Heart left ventricle (tissue), 16 donors: ENCODE measurements at regions of chr12 and their contacts with region 1.

Region 1: GRCh38 chr12:124532331-124532750 is 35.1 kb downstream of the NCOR2 start:
- DNase-seq: peak in 3 of 5 donors; percentile 6 to 51 (median 25)
- ATAC-seq: no peak
- H3K4me3 ChIP-seq: no peak overlapping the region
- H3K27ac ChIP-seq: peak overlapping the region in 1 of 12 donors; percentile 40
- H3K4me1 ChIP-seq: peaks cover 0 to 45% (median 31%) of the 10 kb centered on the region in 12 donors
- H3K27me3 ChIP-seq: no peaks in the 10 kb centered on the region
- CTCF ChIP-seq: no peak
- POLR2A ChIP-seq: no peak

Region 2: DNA sequence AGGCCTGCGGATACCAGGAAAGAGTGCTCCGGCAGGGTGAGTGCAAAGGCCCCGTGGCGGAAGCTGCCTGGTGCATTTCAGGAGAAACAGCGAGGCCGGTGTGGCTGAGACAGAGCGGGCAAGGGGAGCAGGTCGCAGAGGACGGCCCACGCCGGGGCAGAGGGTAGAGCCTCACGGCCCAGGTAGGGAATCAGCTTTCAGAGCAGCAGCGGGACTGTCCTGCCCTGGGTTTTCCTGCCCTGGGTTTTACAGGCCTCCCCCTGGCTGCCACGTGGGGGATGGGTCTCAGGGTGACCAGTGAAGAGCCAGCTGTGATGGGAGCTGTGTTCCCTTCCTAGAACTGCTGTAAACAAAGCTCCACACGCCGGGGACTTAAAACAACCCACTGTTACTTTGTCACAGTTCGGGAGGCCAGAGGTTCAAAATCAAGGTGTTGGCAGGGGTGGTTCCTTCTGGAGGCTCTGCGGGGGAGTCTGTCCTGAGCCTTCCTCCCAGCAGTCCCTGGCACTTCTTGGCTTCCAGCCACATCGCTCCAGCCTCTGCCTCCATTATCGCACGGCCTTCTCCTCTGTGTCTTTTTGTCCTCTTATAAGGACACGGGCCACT is 24.7 kb after region 1 on chr12:
- intact Hi-C with region 1: loop called in 1 of 10 experiments (anchors 2 kb)
- DNase-seq: no peak
- ATAC-seq: peak in 2 of 4 donors; percentile 27 to 29
- H3K4me3 ChIP-seq: no peak overlapping the region
- H3K27ac ChIP-seq: peak overlapping the region in 6 of 12 donors; percentile 4 to 74 (median 58)
- H3K4me1 ChIP-seq: peaks cover 10 to 83% (median 64%) of the 10 kb centered on the region in 12 donors
- H3K27me3 ChIP-seq: no peaks in the 10 kb centered on the region
- CTCF ChIP-seq: peak in 1 of 12 donors; percentile 23
- POLR2A ChIP-seq: no peak

Region 3: GRCh38 chr12:124588751-124589267 is 56.5 kb after region 1 on chr12:
- intact Hi-C with region 1: no loop called
- DNase-seq: peak; percentile 72 to 83 (median 76)
- ATAC-seq: peak; percentile 80 to 86 (median 85)
- H3K4me3 ChIP-seq: no peak overlapping the region
- H3K27ac ChIP-seq: peak overlapping the region; percentile 2 to 78 (median 52)
- H3K4me1 ChIP-seq: peaks cover 0 to 57% (median 12%) of the 10 kb centered on the region in 12 donors
- H3K27me3 ChIP-seq: no peaks in the 10 kb centered on the region
- CTCF ChIP-seq: no peak
- POLR2A ChIP-seq: no peak

Region 4: GRCh38 chr12:124599074-124599999 is 67.0 kb after region 1 on chr12:
- intact Hi-C with region 1: no loop called
- DNase-seq: no peak
- ATAC-seq: no peak
- H3K4me3 ChIP-seq: no peak overlapping the region
- H3K27ac ChIP-seq: no peak overlapping the region
- H3K4me1 ChIP-seq: peaks cover 0 to 12% (median 0%) of the 10 kb centered on the region in 12 donors
- H3K27me3 ChIP-seq: no peaks in the 10 kb centered on the region
- CTCF ChIP-seq: no peak
- POLR2A ChIP-seq: no peak